IMR-90 (cell line): ENCODE measurements at regions of chr1 and their contacts with region 1.

Region 1: GRCh38 chr1:215056584-215056983 is 26.0 kb upstream of the KCNK2 start:
- DNase-seq: peak; percentile 82
- ATAC-seq: peak; percentile 29; the same call in 1 of the 2 replicates
- H3K4me3 ChIP-seq: no peak overlapping the region
- H3K27ac ChIP-seq: no peak overlapping the region
- H3K4me1 ChIP-seq: peaks cover 4% of the 10 kb centered on the region; the same call in 1 of the 2 replicates
- H3K27me3 ChIP-seq: no peaks in the 10 kb centered on the region
- CTCF ChIP-seq: no peak
- POLR2A ChIP-seq: no peak
- RAD21 ChIP-seq: no peak

Region 2: GRCh38 chr1:214934045-214934444 is 122.5 kb before region 1 on chr1:
- CTCF ChIA-PET with region 1: no interaction called
- POLR2A ChIA-PET with region 1: interaction called, 12 read pairs
- dilution Hi-C with region 1: no loop called
- in situ Hi-C with region 1: no loop called
- intact Hi-C with region 1: no loop called
- DNase-seq: no peak
- ATAC-seq: no peak
- H3K4me3 ChIP-seq: no peak overlapping the region
- H3K27ac ChIP-seq: no peak overlapping the region
- H3K4me1 ChIP-seq: no peaks in the 10 kb centered on the region
- H3K27me3 ChIP-seq: no peaks in the 10 kb centered on the region
- CTCF ChIP-seq: no peak
- POLR2A ChIP-seq: no peak
- RAD21 ChIP-seq: no peak

Region 3: GRCh38 chr1:215043401-215043800 is 13.2 kb before region 1 on chr1:
- CTCF ChIA-PET with region 1: no interaction called
- POLR2A ChIA-PET with region 1: no interaction called
- dilution Hi-C with region 1: no loop called
- in situ Hi-C with region 1: no loop called
- intact Hi-C with region 1: loop called (anchors 1 kb)
- DNase-seq: no peak
- ATAC-seq: no peak
- H3K4me3 ChIP-seq: no peak overlapping the region
- H3K27ac ChIP-seq: no peak overlapping the region
- H3K4me1 ChIP-seq: no peaks in the 10 kb centered on the region
- H3K27me3 ChIP-seq: no peaks in the 10 kb centered on the region
- CTCF ChIP-seq: no peak
- POLR2A ChIP-seq: no peak
- RAD21 ChIP-seq: no peak

Region 4: DNA sequence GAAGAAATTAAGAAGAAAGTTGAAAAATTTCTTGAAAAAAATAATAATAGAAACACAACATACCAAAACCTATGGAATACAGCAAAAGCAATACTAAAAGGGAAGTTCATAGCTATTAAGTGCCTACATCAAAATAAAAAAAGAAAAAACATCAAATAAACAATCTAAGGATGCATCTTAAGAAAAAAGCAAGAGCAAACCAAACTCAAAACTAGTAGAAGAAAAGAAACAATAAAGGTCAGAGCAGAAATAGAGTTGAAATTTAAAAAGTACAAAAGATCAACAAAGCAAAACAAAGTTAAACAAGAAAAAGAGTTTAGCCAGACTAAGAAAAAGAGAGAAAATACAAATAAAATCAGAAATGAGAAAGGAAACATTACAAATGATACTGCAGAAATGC is 327.1 kb after region 1 on chr1:
- CTCF ChIA-PET with region 1: no interaction called
- POLR2A ChIA-PET with region 1: no interaction called
- dilution Hi-C with region 1: no loop called
- in situ Hi-C with region 1: no loop called
- intact Hi-C with region 1: no loop called
- DNase-seq: no peak
- ATAC-seq: no peak
- H3K4me3 ChIP-seq: no peak overlapping the region
- H3K27ac ChIP-seq: no peak overlapping the region
- H3K4me1 ChIP-seq: no peaks in the 10 kb centered on the region
- H3K27me3 ChIP-seq: no peaks in the 10 kb centered on the region
- CTCF ChIP-seq: no peak
- POLR2A ChIP-seq: no peak
- RAD21 ChIP-seq: no peak